Activated CD8-positive, alpha-beta T cell treated with anti-CD3 and anti-CD28 coated beads for 36 hours (primary cell): ENCODE measurements at regions of chr15 and their contacts with region 1.

Region 1: GRCh38 chr15:47987908-47988532 is 132.8 kb upstream of the SLC24A5 start:
- DNase-seq: peak; percentile 35
- ATAC-seq: peak; percentile 69
- H3K4me3 Mint-ChIP-seq: no peak overlapping the region
- H3K27ac Mint-ChIP-seq: no peak overlapping the region
- H3K4me1 Mint-ChIP-seq: no peaks in the 10 kb centered on the region
- H3K27me3 Mint-ChIP-seq: peaks cover 2% of the 10 kb centered on the region
- CTCF ChIP-seq: peak; percentile 67

Region 2: GRCh38 chr15:47196057-47196456 is 792.0 kb before region 1 on chr15:
- CTCF ChIA-PET with region 1: interaction called, 9 read pairs
- POLR2A ChIA-PET with region 1: no interaction called
- intact Hi-C with region 1: loop called (anchors 2 kb)
- DNase-seq: peak; percentile 57
- ATAC-seq: peak; percentile 66
- H3K4me3 Mint-ChIP-seq: no peak overlapping the region
- H3K27ac Mint-ChIP-seq: no peak overlapping the region
- H3K4me1 Mint-ChIP-seq: no peaks in the 10 kb centered on the region
- H3K27me3 Mint-ChIP-seq: no peaks in the 10 kb centered on the region
- CTCF ChIP-seq: peak; percentile 69

Region 3: DNA sequence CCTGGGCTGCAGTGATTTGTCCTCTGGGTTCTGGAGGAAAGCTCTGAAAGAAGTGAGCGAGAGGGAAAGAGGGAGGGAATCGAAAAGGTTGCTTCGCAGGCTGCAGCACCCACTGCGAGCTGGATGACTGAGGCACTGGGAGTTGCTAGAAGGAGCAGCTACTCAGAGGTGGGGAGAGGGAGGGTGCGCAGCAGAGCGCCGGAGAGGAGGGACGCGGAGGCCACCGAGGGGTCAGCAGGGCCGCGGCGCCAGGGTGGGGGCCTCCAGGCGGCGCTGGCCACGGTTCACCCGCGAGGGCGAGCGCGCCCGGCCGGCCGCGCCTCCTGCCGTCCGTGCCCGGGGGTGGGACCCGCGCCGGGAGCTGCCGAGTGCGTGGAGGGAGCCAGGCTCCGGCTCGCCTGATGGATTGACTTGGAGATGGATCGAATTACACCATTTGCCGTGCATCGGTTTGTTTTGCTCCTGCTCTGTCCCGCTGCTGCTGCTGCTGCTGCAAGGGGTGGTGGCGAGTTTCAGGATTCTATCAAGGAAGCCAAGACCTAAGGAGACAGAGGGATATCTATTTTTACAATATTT is 270.9 kb before region 1 on chr15 and contains the start of gene SEMA6D:
- CTCF ChIA-PET with region 1: interaction called, 8 read pairs
- POLR2A ChIA-PET with region 1: no interaction called
- intact Hi-C with region 1: loop called (anchors 10 kb)
- DNase-seq: no peak
- ATAC-seq: no peak
- H3K4me3 Mint-ChIP-seq: no peak within 1 kb of the TSS
- H3K27ac Mint-ChIP-seq: no peak within 1 kb of the TSS
- H3K4me1 Mint-ChIP-seq: no peaks in the 10 kb centered on the region
- H3K27me3 Mint-ChIP-seq: peaks cover 32% of the 10 kb centered on the region
- CTCF ChIP-seq: no peak
- total RNA-seq, gene SEMA6D: not detected

Region 4: DNA sequence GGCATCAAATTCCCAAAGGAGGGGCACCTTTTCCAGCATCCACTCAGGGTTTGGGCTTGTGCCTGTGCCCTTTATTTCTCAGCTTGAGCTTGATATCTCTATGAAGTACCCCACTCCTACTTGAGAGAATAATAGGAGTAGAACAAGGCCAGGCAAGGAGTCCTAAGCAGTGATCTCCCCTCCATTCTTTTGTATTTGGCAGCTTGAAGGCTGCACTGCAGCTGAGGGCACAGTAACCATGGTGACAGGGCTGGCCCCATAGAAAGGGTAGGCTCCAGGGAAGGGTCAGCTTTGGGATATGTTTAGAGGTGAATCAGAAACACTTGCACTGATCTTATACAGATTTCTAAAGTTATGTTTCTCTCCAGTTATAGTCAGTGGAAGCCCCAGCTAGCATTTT is 12.6 kb before region 1 on chr15:
- CTCF ChIA-PET with region 1: interaction called, 20 read pairs
- POLR2A ChIA-PET with region 1: no interaction called
- intact Hi-C with region 1: no loop called
- DNase-seq: no peak
- ATAC-seq: no peak
- H3K4me3 Mint-ChIP-seq: no peak overlapping the region
- H3K27ac Mint-ChIP-seq: no peak overlapping the region
- H3K4me1 Mint-ChIP-seq: no peaks in the 10 kb centered on the region
- H3K27me3 Mint-ChIP-seq: peaks cover 12% of the 10 kb centered on the region
- CTCF ChIP-seq: no peak